ENCODE measurements at regions of chr1 and their contacts with region 1.

Region 1: DNA sequence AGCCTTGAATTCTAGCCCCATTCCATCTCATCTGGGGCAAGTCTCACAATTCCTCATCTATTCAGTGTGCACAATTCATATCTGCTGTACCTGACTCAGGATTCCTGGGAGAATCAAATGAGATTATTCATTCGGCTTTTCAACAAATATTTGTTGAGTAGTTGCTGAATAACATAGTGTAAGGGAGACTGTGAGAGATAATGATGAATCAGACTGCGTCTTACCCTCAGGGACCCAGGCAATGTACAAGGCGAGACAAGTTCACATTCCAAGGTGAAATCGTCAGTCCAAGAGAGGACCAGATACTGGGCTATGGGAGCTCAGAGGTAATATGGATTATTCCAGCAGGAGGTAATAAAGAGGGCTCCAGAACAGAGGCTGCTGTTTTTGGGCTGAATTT is 67.8 kb upstream of the SMYD2 start:
- DNase-seq: peak; percentile 95
- H3K4me3 ChIP-seq: no peak overlapping the region
- H3K27ac ChIP-seq: peak overlapping the region; percentile 60
- H3K4me1 ChIP-seq: peaks cover 52% of the 10 kb centered on the region
- H3K27me3 ChIP-seq: no peaks in the 10 kb centered on the region
- CTCF ChIP-seq: peak in 1 of 2 donors; percentile 31

Region 2: GRCh38 chr1:213374369-213374768 is 838.8 kb before region 1 on chr1:
- CTCF ChIA-PET with region 1: no interaction called
- dilution Hi-C with region 1: no loop called
- in situ Hi-C with region 1: no loop called
- intact Hi-C with region 1: loop called (anchors 1 kb)
- DNase-seq: peak; percentile 23
- H3K4me3 ChIP-seq: no peak overlapping the region
- H3K27ac ChIP-seq: no peak overlapping the region
- H3K4me1 ChIP-seq: no peaks in the 10 kb centered on the region
- H3K27me3 ChIP-seq: no peaks in the 10 kb centered on the region
- CTCF ChIP-seq: peak; percentile 83 to 90

Region 3: GRCh38 chr1:213519098-213519497 is 694.0 kb before region 1 on chr1:
- CTCF ChIA-PET with region 1: no interaction called
- dilution Hi-C with region 1: no loop called
- in situ Hi-C with region 1: no loop called
- intact Hi-C with region 1: no loop called
- DNase-seq: no peak
- H3K4me3 ChIP-seq: no peak overlapping the region
- H3K27ac ChIP-seq: no peak overlapping the region
- H3K4me1 ChIP-seq: no peaks in the 10 kb centered on the region
- H3K27me3 ChIP-seq: no peaks in the 10 kb centered on the region
- CTCF ChIP-seq: no peak

Region 4: DNA sequence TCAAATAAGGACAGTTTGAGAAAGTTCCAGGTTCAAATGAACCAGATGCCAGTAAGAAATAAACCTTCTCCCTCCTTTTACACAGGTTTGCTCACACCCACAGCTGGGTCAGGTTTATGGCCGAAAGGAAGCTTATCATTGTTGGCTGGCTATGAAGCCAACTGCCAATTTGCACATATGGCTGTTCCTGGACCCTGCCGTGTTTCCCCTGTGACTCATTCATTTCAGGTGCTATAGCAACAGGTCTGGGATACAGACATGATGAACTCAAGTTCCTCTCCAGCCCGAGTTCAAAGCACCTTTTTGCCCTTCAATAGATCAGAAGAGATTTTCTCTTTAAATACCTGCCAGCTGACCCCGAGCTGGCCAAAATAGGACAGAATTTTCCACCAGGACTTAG is 66.6 kb before region 1 on chr1:
- CTCF ChIA-PET with region 1: no interaction called
- dilution Hi-C with region 1: no loop called
- in situ Hi-C with region 1: no loop called
- intact Hi-C with region 1: no loop called
- DNase-seq: peak; percentile 63
- H3K4me3 ChIP-seq: no peak overlapping the region
- H3K27ac ChIP-seq: peak overlapping the region; percentile 11
- H3K4me1 ChIP-seq: peaks cover 17% of the 10 kb centered on the region
- H3K27me3 ChIP-seq: no peaks in the 10 kb centered on the region
- CTCF ChIP-seq: no peak

Region 5: GRCh38 chr1:214261206-214262123 is 48.3 kb after region 1 on chr1:
- CTCF ChIA-PET with region 1: interaction called, 28 read pairs
- dilution Hi-C with region 1: no loop called
- in situ Hi-C with region 1: no loop called
- intact Hi-C with region 1: loop called (anchors 1 kb)
- DNase-seq: peak; percentile 62
- H3K4me3 ChIP-seq: no peak overlapping the region
- H3K27ac ChIP-seq: no peak overlapping the region
- H3K4me1 ChIP-seq: peaks cover 14% of the 10 kb centered on the region
- H3K27me3 ChIP-seq: no peaks in the 10 kb centered on the region
- CTCF ChIP-seq: peak; percentile 96 to 97

Region 6: DNA sequence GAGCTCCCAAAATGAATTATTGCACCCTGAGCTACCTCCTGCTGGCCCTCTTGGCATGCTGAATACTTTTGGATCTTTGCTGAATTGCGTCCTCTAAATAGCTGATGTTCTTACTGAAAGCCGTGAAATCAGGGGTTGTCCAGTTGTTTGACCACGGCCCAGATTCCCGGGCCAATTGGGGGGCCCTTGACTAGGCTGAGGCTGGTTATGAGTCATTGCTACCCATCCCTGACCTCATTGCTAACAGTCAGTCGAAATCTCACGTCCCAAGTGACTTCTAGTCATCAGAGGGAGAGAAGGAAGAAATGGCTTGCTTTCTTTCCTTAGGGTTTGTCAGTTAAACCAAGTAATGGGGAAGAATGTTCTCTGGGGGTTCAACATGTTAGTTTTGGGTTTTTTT is 105.2 kb after region 1 on chr1:
- CTCF ChIA-PET with region 1: interaction called, 11 read pairs
- dilution Hi-C with region 1: no loop called
- in situ Hi-C with region 1: no loop called
- intact Hi-C with region 1: no loop called
- DNase-seq: no peak
- H3K4me3 ChIP-seq: no peak overlapping the region
- H3K27ac ChIP-seq: no peak overlapping the region
- H3K4me1 ChIP-seq: no peaks in the 10 kb centered on the region
- H3K27me3 ChIP-seq: no peaks in the 10 kb centered on the region
- CTCF ChIP-seq: no peak

Region 7: GRCh38 chr1:214632091-214632490 is 419.0 kb after region 1 on chr1:
- CTCF ChIA-PET with region 1: interaction called, 15 read pairs
- dilution Hi-C with region 1: no loop called
- in situ Hi-C with region 1: no loop called
- intact Hi-C with region 1: loop called (anchors 1 kb)
- DNase-seq: no peak
- H3K4me3 ChIP-seq: no peak overlapping the region
- H3K27ac ChIP-seq: no peak overlapping the region
- H3K4me1 ChIP-seq: no peaks in the 10 kb centered on the region
- H3K27me3 ChIP-seq: no peaks in the 10 kb centered on the region
- CTCF ChIP-seq: no peak

Measured in mammary epithelial cell (primary cell).